MCF 10A (cell line): ENCODE measurements at regions of chr6 and their contacts with region 1.

Region 1: GRCh38 chr6:143337201-143337949 is 113.1 kb downstream of the ADAT2 start:
- DNase-seq: peak; percentile 93
- H3K4me3 Mint-ChIP-seq: peak overlapping the region; percentile 46
- H3K27ac Mint-ChIP-seq: peak overlapping the region; percentile 99
- H3K4me1 Mint-ChIP-seq: peaks cover 40% of the 10 kb centered on the region
- H3K27me3 Mint-ChIP-seq: no peaks in the 10 kb centered on the region
- CTCF ChIP-seq: peak; percentile 86

Region 2: DNA sequence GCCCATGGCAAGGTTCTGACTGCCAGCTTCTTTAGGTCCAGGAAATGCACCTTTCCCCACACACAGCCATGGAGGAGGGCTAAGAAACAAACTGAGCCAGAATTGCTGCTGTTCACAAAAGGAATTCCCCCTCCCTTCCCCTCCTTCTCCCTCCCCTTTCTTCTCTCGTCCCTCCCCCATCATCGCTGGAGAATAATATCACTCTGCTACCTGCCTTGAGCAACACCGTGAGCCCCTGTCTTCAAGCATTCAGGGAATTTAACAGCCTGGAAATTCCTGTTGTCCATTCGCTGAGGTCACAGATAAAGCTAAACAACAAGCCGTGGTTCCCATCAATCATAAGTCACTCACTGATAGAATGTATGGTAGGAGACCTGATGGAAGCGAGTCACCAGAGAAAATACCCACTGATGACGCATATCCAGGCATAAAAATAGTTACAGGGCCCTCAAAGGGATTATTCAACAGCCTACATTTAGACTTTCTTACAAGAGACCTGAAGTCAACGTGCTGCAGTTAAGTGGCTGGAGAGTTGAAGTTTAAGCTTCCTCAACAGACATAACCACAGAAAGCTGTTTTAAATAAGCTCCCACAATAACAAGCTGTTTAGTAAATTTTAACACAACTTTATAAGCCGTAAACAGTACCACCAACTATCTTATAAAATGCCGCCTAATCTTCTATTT is 452.1 kb before region 1 on chr6:
- CTCF ChIA-PET with region 1: interaction called, 4 read pairs
- POLR2A ChIA-PET with region 1: interaction called, 5 read pairs
- intact Hi-C with region 1: loop called (anchors 2 kb)
- DNase-seq: peak; percentile 97
- H3K4me3 Mint-ChIP-seq: peak overlapping the region; percentile 71
- H3K27ac Mint-ChIP-seq: peak overlapping the region; percentile 36
- H3K4me1 Mint-ChIP-seq: peaks cover 32% of the 10 kb centered on the region
- H3K27me3 Mint-ChIP-seq: no peaks in the 10 kb centered on the region
- CTCF ChIP-seq: no peak

Region 3: DNA sequence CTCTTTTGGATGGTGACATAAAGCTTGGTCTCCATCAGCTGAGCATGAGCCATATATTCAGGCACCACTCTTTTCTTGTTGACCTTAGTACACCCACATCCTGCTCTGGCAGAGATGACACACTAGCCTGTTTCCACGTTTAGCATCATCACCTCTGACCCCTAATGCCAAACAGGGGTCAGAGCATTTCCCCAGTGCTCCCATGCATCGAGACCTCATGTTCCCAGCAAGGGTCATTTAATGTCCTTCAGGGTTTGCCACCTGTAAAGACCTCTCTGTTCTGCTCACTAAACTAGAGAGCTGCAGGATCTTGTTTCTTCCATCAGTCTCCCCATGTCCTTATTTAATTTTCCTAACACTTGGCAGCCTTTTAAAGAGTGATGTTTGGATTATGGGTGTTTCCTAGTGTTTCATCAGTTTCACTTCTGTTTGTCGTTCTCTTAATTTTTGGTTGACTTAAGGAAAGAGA is 179.2 kb before region 1 on chr6:
- CTCF ChIA-PET with region 1: no interaction called
- POLR2A ChIA-PET with region 1: no interaction called
- intact Hi-C with region 1: no loop called
- DNase-seq: no peak
- H3K4me3 Mint-ChIP-seq: no peak overlapping the region
- H3K27ac Mint-ChIP-seq: peak overlapping the region; percentile 8
- H3K4me1 Mint-ChIP-seq: peaks cover 21% of the 10 kb centered on the region
- H3K27me3 Mint-ChIP-seq: no peaks in the 10 kb centered on the region
- CTCF ChIP-seq: no peak

Region 4: DNA sequence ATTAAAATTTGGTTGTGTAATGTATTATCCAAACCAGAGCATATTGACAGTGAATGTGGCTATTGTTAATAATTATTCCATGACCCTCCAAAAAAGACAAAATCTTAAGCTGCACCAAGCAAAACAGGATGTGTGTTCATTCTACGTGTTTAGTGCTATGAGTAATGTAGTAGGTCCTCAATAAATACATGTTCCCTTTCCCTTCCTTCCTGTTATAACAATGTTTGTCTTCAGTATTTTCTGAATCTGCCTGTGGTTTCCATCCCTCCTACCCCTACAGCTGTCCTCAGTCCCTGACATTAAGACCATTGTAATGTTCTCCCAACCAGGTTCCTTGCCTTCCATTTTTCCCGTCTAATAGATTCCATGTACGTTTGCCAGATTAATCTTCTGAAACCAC is 112.9 kb before region 1 on chr6:
- CTCF ChIA-PET with region 1: interaction called, 6 read pairs
- POLR2A ChIA-PET with region 1: interaction called, 23 read pairs
- intact Hi-C with region 1: no loop called
- DNase-seq: no peak
- H3K4me3 Mint-ChIP-seq: no peak overlapping the region
- H3K27ac Mint-ChIP-seq: peak overlapping the region; percentile 84
- H3K4me1 Mint-ChIP-seq: peaks cover 17% of the 10 kb centered on the region
- H3K27me3 Mint-ChIP-seq: no peaks in the 10 kb centered on the region
- CTCF ChIP-seq: no peak

Region 5: GRCh38 chr6:143258945-143259344 is 78.4 kb before region 1 on chr6:
- CTCF ChIA-PET with region 1: no interaction called
- POLR2A ChIA-PET with region 1: no interaction called
- intact Hi-C with region 1: no loop called
- DNase-seq: no peak
- H3K4me3 Mint-ChIP-seq: no peak overlapping the region
- H3K27ac Mint-ChIP-seq: no peak overlapping the region
- H3K4me1 Mint-ChIP-seq: no peaks in the 10 kb centered on the region
- H3K27me3 Mint-ChIP-seq: no peaks in the 10 kb centered on the region
- CTCF ChIP-seq: no peak

Region 6: DNA sequence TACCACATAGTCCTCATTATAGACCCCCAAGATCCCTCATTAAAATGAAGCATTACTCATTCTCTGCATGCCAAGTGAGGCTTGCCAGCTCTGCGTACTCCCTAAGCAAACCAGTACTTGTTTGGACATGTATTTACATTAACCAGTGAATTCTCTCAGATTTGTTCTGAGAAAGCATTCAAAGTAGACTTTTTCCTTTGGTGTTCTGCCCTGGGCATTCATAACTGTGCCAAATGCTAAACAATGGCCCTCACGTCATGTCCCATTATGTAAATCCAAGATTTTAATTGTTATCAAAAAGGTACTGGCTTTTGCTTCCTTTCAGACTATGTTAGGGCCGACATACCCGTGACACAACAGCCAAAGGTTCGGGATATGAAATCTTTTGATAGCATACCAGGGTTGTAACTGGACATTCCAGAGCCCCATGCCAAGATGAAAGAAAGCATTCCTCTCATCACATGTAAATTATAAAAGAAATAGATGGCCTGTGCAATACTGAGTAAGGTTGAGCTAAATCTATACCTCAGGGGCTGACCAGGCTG is 51.1 kb before region 1 on chr6:
- CTCF ChIA-PET with region 1: interaction called, 4 read pairs
- POLR2A ChIA-PET with region 1: interaction called, 15 read pairs
- intact Hi-C with region 1: no loop called
- DNase-seq: peak; percentile 91
- H3K4me3 Mint-ChIP-seq: no peak overlapping the region
- H3K27ac Mint-ChIP-seq: peak overlapping the region; percentile 87
- H3K4me1 Mint-ChIP-seq: peaks cover 26% of the 10 kb centered on the region
- H3K27me3 Mint-ChIP-seq: no peaks in the 10 kb centered on the region
- CTCF ChIP-seq: no peak

Region 7: GRCh38 chr6:143405373-143406154 is 68.2 kb after region 1 on chr6:
- CTCF ChIA-PET with region 1: interaction called, 6 read pairs
- POLR2A ChIA-PET with region 1: interaction called, 402 read pairs
- intact Hi-C with region 1: no loop called
- DNase-seq: peak; percentile 49
- H3K4me3 Mint-ChIP-seq: peak overlapping the region; percentile 25
- H3K27ac Mint-ChIP-seq: peak overlapping the region; percentile 85
- H3K4me1 Mint-ChIP-seq: peaks cover 52% of the 10 kb centered on the region
- H3K27me3 Mint-ChIP-seq: no peaks in the 10 kb centered on the region
- CTCF ChIP-seq: no peak

Region 8: DNA sequence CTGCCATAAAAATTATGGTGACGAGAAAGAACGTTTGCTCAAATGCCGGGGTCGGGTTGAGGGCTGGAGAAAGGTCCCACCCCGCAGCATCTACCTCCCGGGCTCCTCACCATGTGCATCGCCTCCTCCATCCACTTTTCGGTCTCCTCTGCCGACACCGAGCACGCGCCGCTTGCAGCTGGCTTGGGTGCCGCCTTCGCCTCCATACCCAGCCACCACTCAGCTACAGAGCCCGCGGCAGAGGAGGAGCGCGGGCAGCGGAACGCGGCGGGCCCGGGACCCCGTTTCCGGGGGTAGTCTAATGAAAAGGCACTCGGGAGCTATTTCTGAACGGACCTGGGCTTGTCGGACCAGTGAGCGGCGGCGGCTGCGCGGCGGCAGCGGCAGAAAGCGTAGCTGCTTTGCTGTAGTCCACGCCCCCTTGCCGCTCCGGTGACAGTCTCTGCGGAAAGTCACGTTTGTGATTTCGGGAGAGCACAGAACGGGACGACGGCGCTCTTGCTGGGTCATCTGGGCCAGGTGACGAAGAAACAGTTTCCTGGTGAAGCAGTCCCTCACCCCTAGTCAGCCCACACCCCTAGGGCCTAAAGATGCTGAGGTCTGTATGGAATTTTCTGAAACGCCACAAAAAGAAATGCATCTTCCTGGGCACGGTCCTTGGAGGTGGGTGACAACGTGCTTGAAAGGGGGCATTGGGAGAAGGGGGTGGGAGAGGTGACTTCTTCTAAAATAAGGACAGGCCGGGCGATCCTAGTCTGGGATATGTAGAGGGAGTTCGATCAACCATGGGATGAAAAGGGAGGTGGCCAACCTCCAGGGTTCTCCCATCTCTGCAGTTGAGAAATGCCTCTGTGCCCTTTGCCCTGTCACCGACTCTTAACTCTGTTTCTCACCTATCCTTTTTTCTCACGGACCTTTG is 113.3 kb after region 1 on chr6 and contains the starts of genes ADAT2 and PEX3:
- CTCF ChIA-PET with region 1: interaction called, 4 read pairs
- POLR2A ChIA-PET with region 1: interaction called, 42 read pairs
- intact Hi-C with region 1: no loop called
- DNase-seq: peak; percentile 95
- H3K4me3 Mint-ChIP-seq: peak within 1 kb of the TSS; percentile 97
- H3K27ac Mint-ChIP-seq: peak within 1 kb of the TSS; percentile 97
- H3K4me1 Mint-ChIP-seq: peaks cover 24% of the 10 kb centered on the region
- H3K27me3 Mint-ChIP-seq: no peaks in the 10 kb centered on the region
- CTCF ChIP-seq: no peak
- total RNA-seq, gene ADAT2: 23.2 and 27.7 TPM in 2 replicates
- total RNA-seq, gene PEX3: 19.8 and 24.3 TPM in 2 replicates

Region 9: DNA sequence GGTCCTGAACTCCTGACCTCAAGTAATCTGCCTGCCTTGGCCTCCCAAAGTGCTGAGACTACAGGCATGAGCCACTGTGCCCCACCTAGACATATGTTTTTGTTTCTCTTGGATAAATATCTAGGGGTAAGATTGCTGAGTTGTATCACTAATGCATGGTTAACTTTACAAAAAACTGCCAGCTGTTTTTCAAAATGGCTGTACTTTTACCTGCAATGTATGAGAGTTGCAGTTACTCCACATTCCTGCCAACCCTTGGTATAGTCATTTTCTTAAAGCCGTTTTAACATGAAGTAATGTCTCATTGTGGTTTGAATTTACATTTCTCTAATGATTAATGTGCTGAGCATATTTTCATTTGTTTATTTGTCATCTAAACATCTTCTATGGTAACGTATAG is 1237.4 kb after region 1 on chr6:
- CTCF ChIA-PET with region 1: no interaction called
- POLR2A ChIA-PET with region 1: no interaction called
- intact Hi-C with region 1: no loop called
- DNase-seq: no peak
- H3K4me3 Mint-ChIP-seq: no peak overlapping the region
- H3K27ac Mint-ChIP-seq: no peak overlapping the region
- H3K4me1 Mint-ChIP-seq: no peaks in the 10 kb centered on the region
- H3K27me3 Mint-ChIP-seq: no peaks in the 10 kb centered on the region
- CTCF ChIP-seq: no peak